ENCODE measurements at regions of chr18 and their contacts with region 1.

Region 1: DNA sequence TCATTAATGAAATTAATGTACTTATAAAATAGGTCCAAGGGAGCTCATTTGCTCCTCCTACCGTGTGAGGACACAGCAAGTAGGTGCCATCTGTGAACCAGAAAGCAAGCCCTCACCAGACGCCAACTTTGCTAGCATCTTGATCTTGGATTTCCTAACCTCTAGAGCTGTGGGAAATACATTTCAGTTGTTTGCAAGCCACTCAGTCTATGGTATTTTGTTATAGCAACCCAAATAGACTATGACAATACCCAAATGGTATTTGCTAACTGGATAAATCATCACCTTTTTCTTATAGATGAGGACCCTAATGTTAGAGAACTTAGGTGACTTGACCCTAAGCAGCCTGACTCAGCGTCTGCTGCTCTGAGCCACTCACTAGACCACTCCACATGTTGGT is 379.6 kb downstream of the HRH4 start:
- DNase-seq: no peak
- H3K4me3 ChIP-seq: no peak overlapping the region
- H3K27ac ChIP-seq: no peak overlapping the region
- H3K4me1 ChIP-seq: no peaks in the 10 kb centered on the region
- H3K27me3 ChIP-seq: no peaks in the 10 kb centered on the region
- CTCF ChIP-seq: no peak

Region 2: DNA sequence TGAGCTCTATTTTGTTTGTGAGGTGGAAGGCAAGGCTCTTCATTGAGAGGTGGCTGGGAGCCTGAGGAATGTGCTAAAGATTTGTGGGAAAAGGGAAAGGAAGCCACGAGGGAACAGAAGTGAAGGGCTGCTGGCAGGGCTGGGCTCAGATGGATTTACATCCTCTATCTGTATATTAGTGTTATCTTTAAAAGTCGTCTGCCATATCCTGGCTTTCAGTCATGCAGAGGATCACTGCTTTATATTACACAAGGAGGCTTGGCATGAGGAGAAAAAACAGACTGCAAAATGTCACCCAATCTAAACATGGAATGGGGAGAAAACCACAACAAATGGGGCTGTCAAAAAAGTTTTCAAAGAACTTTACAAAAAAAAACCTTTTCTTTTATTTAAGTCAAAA is 54.8 kb after region 1 on chr18:
- CTCF ChIA-PET with region 1: no interaction called
- dilution Hi-C with region 1: loop called (anchors 5 kb)
- in situ Hi-C with region 1: no loop called
- intact Hi-C with region 1: no loop called
- DNase-seq: no peak
- H3K4me3 ChIP-seq: no peak overlapping the region
- H3K27ac ChIP-seq: no peak overlapping the region
- H3K4me1 ChIP-seq: no peaks in the 10 kb centered on the region
- H3K27me3 ChIP-seq: peaks cover 2% of the 10 kb centered on the region
- CTCF ChIP-seq: no peak

Region 3: DNA sequence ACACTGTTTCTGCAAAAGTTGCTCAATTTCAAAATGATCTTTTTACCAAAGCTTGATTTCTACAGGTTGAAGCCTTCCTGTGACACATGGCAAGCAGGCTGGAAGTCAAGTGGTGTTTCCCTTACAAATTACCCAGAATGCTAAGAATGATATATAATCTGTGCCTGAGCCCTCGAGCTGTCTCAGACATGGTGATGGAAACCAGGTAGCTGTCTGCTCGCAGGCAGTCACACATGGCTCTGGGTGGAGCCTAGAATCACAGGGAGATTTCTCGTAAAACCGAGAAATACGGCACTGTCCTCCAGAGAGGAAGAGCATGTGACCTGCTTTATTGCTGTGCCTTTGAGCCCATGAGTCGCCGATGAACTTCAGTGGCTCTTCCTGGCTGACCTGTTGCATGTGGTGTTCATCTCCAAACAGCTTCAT is 119.0 kb after region 1 on chr18:
- CTCF ChIA-PET with region 1: no interaction called
- dilution Hi-C with region 1: no loop called
- in situ Hi-C with region 1: no loop called
- intact Hi-C with region 1: no loop called
- DNase-seq: no peak
- H3K4me3 ChIP-seq: no peak overlapping the region
- H3K27ac ChIP-seq: no peak overlapping the region
- H3K4me1 ChIP-seq: no peaks in the 10 kb centered on the region
- H3K27me3 ChIP-seq: no peaks in the 10 kb centered on the region
- CTCF ChIP-seq: no peak

Region 4: DNA sequence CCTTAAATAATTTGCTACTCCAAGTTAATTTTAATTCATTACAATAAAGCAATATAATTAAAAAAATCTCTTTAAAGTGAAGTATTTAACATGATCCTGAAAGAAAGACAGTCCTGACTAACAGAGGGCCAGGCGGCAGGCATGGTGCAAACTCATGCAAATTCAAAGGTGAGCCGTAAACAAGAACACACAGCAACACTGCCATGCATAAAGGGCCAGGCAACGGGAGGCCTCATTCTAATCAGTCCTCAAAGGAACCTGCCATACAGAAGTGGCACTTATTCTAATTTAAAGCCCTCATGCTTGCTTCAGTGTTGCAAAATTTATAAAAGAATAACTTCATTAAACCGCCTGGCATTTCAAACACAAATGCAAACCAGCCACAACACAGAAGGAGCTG is 234.9 kb after region 1 on chr18:
- CTCF ChIA-PET with region 1: no interaction called
- dilution Hi-C with region 1: loop called (anchors 5 kb)
- in situ Hi-C with region 1: no loop called
- intact Hi-C with region 1: no loop called
- DNase-seq: no peak
- H3K4me3 ChIP-seq: no peak overlapping the region
- H3K27ac ChIP-seq: no peak overlapping the region
- H3K4me1 ChIP-seq: no peaks in the 10 kb centered on the region
- H3K27me3 ChIP-seq: peaks cover 2% of the 10 kb centered on the region
- CTCF ChIP-seq: no peak

Region 5: DNA sequence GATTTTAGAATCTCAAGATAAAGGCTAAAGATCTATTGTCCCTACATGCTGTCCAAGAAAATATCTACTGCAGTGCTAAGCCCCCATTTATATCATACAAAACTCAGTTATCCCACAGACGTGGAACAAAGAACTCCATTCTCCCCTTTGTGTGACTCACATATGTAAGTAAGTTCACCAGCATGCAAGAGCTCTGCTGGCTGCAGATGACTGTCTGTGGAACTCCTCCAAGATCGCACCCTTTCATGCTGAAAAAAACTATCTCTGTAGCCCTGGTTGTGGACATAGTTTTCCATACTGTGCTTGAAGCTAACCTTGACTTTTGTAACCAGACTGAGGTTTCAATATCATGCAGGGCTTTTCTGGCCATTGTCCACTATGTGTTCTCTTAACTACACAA is 304.8 kb after region 1 on chr18:
- CTCF ChIA-PET with region 1: no interaction called
- dilution Hi-C with region 1: no loop called
- in situ Hi-C with region 1: no loop called
- intact Hi-C with region 1: no loop called
- DNase-seq: peak; percentile 56
- H3K4me3 ChIP-seq: no peak overlapping the region
- H3K27ac ChIP-seq: no peak overlapping the region
- H3K4me1 ChIP-seq: no peaks in the 10 kb centered on the region
- H3K27me3 ChIP-seq: no peaks in the 10 kb centered on the region
- CTCF ChIP-seq: no peak

Measured in mammary epithelial cell (primary cell).